ENCODE measurements at regions of chr1 and their contacts with region 1.

Region 1: GRCh38 chr1:155250633-155251449 is 4.4 kb downstream of the ENTREP3 start:
- DNase-seq: peak; percentile 99
- ATAC-seq: peak; percentile 87
- H3K4me3 Mint-ChIP-seq: peak overlapping the region; percentile 58
- H3K27ac Mint-ChIP-seq: peak overlapping the region; percentile 89
- H3K4me1 Mint-ChIP-seq: peaks cover 24% of the 10 kb centered on the region
- H3K27me3 Mint-ChIP-seq: peaks cover 16% of the 10 kb centered on the region
- CTCF ChIP-seq: peak; percentile 99

Region 2: GRCh38 chr1:154961497-154962262 is 289.2 kb before region 1 on chr1 and contains the start of gene PYGO2:
- CTCF ChIA-PET with region 1: no interaction called
- POLR2A ChIA-PET with region 1: no interaction called
- DNase-seq: peak; percentile 83
- ATAC-seq: peak; percentile 66
- H3K4me3 Mint-ChIP-seq: peak within 1 kb of the TSS; percentile 93
- H3K27ac Mint-ChIP-seq: peak within 1 kb of the TSS; percentile 91
- H3K4me1 Mint-ChIP-seq: peaks cover 32% of the 10 kb centered on the region
- H3K27me3 Mint-ChIP-seq: no peaks in the 10 kb centered on the region
- CTCF ChIP-seq: no peak
- total RNA-seq, gene PYGO2: 37.4 to 38.8 TPM (median 38.0 TPM) in 3 replicates

Region 3: DNA sequence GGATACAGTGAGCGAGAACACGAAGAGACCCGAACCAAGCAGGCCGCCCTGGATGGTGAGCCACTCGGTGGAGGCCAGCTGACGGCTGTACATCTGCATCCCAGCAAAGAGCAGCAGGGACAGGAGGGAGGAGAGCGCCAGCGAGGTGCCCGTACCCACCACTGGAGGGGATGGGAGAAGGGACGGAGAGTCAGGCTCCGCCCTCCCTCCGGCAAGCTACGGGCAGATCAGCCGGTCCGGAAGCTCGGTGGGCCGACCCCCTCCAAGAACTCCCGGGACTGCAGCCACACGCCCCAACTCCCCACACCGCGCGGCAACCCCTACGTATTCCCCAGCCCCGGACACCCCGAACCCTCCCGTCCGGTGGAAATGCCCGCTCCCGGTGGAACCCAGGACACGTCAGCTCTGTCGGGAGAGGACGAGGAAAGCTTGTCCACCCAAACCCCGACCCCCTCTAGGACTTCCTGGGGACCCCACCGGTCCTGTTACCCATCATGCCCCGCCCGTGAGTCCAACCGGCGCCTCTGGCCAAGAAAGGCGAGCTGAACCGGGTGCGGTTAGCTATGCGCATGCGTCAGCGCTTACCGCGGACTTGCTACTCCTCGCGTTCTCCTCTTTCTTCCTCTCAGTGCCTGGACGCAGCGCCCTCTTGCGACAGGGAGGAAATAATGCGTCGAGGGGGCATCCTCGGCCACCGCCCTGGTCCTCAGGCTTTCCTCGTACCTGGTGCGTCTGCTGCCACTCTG is 77.9 kb before region 1 on chr1 and contains the start of gene KRTCAP2:
- CTCF ChIA-PET with region 1: interaction called, 39 read pairs
- POLR2A ChIA-PET with region 1: no interaction called
- DNase-seq: peak; percentile 97
- ATAC-seq: peak; percentile 64
- H3K4me3 Mint-ChIP-seq: peak within 1 kb of the TSS; percentile 94
- H3K27ac Mint-ChIP-seq: peak within 1 kb of the TSS; percentile 95
- H3K4me1 Mint-ChIP-seq: peaks cover 29% of the 10 kb centered on the region
- H3K27me3 Mint-ChIP-seq: no peaks in the 10 kb centered on the region
- CTCF ChIP-seq: peak; percentile 88
- total RNA-seq, gene KRTCAP2: 104 to 161 TPM (median 147 TPM) in 3 replicates

Region 4: DNA sequence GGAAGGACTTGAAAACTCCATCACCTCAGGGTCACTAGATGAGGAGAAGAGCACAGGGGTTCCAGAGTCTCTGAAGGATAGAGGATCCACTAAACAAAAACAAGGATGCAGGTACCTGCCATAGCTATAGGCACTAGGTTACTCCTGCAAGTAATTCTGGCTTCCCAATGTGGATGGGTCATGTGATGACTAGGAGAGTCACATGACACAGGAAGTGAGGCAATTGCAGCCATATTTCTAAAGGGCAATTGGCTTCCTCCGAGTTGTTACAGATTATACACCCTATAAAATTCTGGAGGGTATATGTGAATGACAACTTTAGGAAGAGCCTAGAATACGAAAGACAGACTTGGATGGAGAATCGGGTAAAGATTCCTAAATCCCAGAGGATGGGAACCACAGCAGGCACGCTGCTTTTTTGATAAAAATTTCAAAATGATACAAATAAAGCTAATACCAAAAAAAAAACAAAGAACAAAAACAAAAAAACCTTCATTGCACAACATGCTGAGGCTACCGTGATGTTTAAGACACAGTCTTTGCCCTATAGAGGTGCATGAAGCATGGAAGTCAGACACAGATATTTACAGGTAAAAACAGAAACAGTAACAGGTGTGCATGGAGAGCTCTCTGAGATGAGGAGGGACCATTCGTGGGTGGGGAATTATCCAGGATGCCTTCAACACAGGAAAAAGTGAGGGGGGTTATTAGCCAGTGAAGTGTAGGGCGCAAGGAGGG is 31.8 kb before region 1 on chr1:
- CTCF ChIA-PET with region 1: interaction called, 48 read pairs
- POLR2A ChIA-PET with region 1: no interaction called
- DNase-seq: no peak
- ATAC-seq: peak; percentile 28
- H3K4me3 Mint-ChIP-seq: peak overlapping the region; percentile 56
- H3K27ac Mint-ChIP-seq: peak overlapping the region; percentile 82
- H3K4me1 Mint-ChIP-seq: peaks cover 12% of the 10 kb centered on the region
- H3K27me3 Mint-ChIP-seq: no peaks in the 10 kb centered on the region
- CTCF ChIP-seq: no peak

Region 5: DNA sequence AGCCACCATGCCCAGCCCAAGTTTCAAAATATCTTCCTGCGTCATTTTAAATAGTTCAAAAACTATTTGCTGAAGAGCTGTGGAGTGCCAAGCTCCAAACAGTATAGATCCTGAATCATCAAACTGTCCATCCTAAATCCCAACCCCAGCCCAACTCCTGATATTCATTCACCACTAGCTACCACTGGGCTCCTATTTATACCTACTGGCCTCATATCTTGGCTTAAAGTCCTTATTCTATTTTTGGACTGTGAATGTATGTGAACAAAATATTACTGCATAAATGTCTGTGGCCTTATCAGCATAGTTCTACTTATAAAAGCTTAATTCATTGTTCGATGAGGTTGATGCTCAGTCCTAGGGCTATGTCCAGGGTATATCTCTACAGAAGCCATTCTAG is 16.5 kb after region 1 on chr1:
- CTCF ChIA-PET with region 1: interaction called, 130 read pairs
- POLR2A ChIA-PET with region 1: interaction called, 3 read pairs
- DNase-seq: no peak
- ATAC-seq: no peak
- H3K4me3 Mint-ChIP-seq: no peak overlapping the region
- H3K27ac Mint-ChIP-seq: no peak overlapping the region
- H3K4me1 Mint-ChIP-seq: peaks cover 14% of the 10 kb centered on the region
- H3K27me3 Mint-ChIP-seq: no peaks in the 10 kb centered on the region
- CTCF ChIP-seq: no peak

Region 6: DNA sequence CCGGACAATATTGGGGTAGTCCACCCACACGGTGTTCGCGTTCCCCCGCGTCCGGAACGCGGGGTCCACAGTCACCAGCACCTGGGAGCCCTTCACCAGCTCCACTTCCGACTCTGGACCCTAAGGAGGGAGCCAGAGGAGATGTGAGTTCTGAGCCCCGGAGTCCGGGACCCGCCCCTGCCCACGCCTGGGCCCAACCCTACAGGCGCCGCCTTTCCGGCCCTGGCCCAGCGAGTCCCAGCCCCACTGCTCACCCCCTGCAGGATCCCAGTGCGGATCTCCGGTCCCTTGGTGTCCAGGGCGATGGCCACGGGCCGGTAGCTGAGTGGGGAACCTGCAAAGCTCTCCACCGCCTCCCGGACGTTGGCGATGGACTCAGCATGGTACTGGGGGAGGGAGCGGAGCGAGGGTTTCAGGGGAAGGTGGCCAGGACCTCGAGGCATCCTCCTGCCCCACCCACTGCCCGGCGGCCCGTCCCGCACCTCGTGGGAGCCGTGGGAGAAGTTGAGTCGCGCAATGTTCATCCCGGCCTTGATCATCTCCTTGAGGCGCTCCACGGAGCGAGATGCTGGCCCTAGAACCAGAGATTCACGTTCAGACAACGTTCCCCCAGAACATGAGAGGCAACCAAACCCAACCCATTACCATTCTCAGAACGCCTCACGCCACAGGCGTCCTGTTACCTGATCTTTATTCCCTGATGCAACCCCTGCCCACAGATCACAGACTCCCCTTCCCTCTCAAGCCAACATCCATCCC is 44.5 kb after region 1 on chr1:
- CTCF ChIA-PET with region 1: interaction called, 15 read pairs
- POLR2A ChIA-PET with region 1: no interaction called
- DNase-seq: peak; percentile 55
- ATAC-seq: peak; percentile 72
- H3K4me3 Mint-ChIP-seq: peak overlapping the region; percentile 78
- H3K27ac Mint-ChIP-seq: no peak overlapping the region
- H3K4me1 Mint-ChIP-seq: peaks cover 29% of the 10 kb centered on the region
- H3K27me3 Mint-ChIP-seq: peaks cover 49% of the 10 kb centered on the region
- CTCF ChIP-seq: no peak

Region 7: GRCh38 chr1:155323798-155324610 is 73.2 kb after region 1 on chr1:
- CTCF ChIA-PET with region 1: interaction called, 204 read pairs
- POLR2A ChIA-PET with region 1: interaction called, 5 read pairs
- DNase-seq: peak; percentile 92
- ATAC-seq: peak; percentile 63
- H3K4me3 Mint-ChIP-seq: peak overlapping the region; percentile 91
- H3K27ac Mint-ChIP-seq: peak overlapping the region; percentile 65; the same call in 1 of the 2 replicates
- H3K4me1 Mint-ChIP-seq: peaks cover 38% of the 10 kb centered on the region
- H3K27me3 Mint-ChIP-seq: peaks cover 6% of the 10 kb centered on the region
- CTCF ChIP-seq: no peak